Transverse colon (tissue), 4 donors: ENCODE measurements at regions of chr20 and their contacts with region 1.

Region 1: DNA sequence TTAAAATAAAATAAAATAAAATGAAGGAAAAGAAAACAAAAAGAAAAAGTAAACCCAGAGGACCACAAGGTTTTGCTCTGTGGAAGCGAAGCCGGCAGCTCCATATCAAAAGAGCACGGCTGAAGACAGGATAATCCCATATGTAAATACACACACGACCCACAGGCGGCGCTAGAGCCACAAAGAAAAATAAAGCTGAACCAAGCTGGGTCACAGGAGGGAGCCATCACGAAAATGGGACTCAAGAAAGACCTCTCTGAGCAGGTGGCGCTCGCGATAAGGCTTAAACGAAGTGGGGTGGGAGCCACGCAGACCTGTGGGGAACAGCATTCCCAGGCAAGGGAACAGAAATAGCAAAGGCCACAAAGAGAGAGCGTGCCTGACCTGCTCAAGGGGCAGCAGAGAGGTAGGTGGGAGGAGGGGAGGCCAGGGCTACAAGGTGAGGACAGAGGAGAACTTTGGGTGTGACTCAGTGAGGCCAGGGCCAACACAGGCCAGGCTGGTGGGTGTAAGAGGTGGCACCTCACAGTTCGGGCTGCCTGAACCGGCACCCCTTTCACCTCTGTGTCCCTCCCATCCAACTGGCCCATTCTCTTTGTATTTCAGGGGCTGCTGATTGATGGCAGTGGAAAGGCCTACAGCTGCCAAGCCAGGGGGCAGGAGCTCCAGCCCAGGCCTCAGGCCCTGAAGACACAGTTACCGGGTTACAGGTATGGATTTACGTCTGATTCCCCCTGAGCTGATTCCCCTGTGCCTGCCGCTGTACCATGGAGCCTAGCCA is 26.0 kb downstream of the PTGIS start:
- DNase-seq: peak; percentile 73
- H3K4me3 ChIP-seq: no peak overlapping the region
- H3K27ac ChIP-seq: peak overlapping the region in 1 of 4 donors; percentile 40
- H3K4me1 ChIP-seq: no peaks in the 10 kb centered on the region
- H3K27me3 ChIP-seq: no peaks in the 10 kb centered on the region
- CTCF ChIP-seq: peak; percentile 79 to 97 (median 81)
- EP300 ChIP-seq: no peak
- POLR2A ChIP-seq: no peak

Region 2: GRCh38 chr20:49330544-49331239 is 211.2 kb before region 1 on chr20:
- in situ Hi-C with region 1: loop called in 1 of 4 experiments (anchors 5 kb)
- intact Hi-C with region 1: loop called (anchors 5 kb)
- DNase-seq: no peak
- H3K4me3 ChIP-seq: no peak overlapping the region
- H3K27ac ChIP-seq: no peak overlapping the region
- H3K4me1 ChIP-seq: peaks cover 0 to 8% (median 0%) of the 10 kb centered on the region in 4 donors
- H3K27me3 ChIP-seq: peaks cover 14% of the 10 kb centered on the region
- CTCF ChIP-seq: no peak
- EP300 ChIP-seq: no peak
- POLR2A ChIP-seq: no peak

Region 3: DNA sequence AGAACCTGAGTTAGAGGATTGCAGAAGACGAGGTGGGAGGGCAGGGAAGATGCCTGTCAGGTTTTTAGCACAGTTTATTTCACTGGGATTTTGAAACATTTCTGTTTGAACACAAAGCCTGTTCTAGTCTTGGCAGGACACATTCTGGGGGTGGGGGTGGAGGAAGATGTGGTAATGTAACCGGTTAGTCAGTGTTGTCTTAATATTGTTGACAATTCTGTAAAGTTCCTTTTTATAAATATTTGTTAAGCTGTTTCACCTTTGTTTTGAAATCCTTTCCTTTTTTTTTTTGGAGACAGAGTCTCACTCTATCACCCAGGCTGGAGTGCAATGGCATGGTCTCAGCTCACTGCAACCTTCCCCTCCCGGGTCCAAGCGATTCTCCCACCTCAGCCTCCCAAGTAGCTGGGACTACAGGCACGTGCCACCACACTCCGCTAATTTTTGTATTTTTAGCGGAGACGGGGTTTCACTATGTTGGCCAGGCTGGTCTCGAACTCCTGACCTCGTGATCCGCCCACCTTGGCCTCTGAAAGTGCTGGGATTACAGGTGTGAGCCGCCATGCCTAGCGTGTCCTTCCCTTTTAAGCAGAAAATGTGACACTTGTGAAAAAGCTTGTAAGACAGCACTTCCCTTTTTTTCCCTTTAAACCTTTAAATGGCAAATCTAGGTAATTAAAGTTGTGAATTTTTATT is 290.9 kb after region 1 on chr20:
- in situ Hi-C with region 1: no loop called
- intact Hi-C with region 1: no loop called
- DNase-seq: no peak
- H3K4me3 ChIP-seq: no peak overlapping the region
- H3K27ac ChIP-seq: peak overlapping the region; percentile 8 to 61 (median 42)
- H3K4me1 ChIP-seq: peaks cover 0 to 7% (median 2%) of the 10 kb centered on the region in 4 donors
- H3K27me3 ChIP-seq: no peaks in the 10 kb centered on the region
- CTCF ChIP-seq: no peak
- EP300 ChIP-seq: no peak
- POLR2A ChIP-seq: no peak

Region 4: DNA sequence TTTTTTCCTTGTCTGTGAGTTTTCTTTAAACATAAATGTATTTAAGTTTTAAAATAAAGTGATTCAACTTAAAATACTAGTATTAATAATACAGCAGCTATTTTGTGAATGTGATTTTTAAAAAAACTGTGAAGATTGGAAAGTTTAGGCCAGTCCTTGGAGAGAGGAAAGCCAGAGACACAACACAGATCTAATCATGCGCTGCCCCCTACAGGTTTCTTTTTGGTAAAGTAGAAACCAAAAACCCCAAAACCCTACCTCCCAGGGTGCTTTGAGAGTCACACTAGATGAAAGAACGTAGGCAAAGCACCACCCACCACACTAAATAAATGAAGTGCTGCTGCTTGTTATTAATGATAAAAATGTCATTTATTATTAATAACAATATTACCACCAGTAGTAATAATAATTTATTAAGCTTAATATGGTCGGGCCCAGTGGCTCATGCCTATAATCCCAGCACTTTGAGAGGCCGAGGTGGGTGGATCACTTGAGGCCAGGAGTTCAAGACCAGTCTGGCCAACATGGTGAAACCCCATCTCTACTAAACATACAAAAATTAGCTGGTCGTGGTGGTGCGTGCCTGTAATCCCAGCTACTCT is 304.4 kb after region 1 on chr20:
- in situ Hi-C with region 1: loop called in 2 of 4 experiments (anchors 10 kb)
- intact Hi-C with region 1: loop called (anchors 10 kb)
- DNase-seq: peak; percentile 46
- H3K4me3 ChIP-seq: no peak overlapping the region
- H3K27ac ChIP-seq: no peak overlapping the region
- H3K4me1 ChIP-seq: peaks cover 0 to 11% (median 0%) of the 10 kb centered on the region in 4 donors
- H3K27me3 ChIP-seq: no peaks in the 10 kb centered on the region
- CTCF ChIP-seq: peak; percentile 63 to 73 (median 72)
- EP300 ChIP-seq: no peak
- POLR2A ChIP-seq: no peak

Region 5: DNA sequence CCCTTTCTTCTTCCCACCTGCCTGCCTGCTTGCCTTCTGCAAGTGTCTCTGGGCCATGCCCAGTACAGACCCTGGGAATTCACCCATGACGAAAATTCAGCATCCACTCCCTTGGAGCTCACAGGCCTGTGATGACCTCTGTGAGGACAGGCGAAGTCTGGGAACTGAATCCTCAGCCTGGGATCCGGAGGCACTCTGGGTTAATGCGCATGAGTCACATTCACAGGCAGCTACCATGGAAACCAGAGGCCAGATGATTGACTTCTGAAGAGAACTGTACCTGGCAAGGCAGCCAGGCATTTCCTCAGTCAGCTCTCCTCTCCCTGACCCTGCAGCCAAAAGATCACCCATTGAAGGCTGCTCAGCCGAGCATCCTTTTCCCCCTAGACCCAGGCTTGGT is 311.7 kb after region 1 on chr20:
- in situ Hi-C with region 1: loop called in 2 of 4 experiments (anchors 10 kb)
- intact Hi-C with region 1: loop called (anchors 10 kb)
- DNase-seq: no peak
- H3K4me3 ChIP-seq: no peak overlapping the region
- H3K27ac ChIP-seq: no peak overlapping the region
- H3K4me1 ChIP-seq: peaks cover 0 to 7% (median 0%) of the 10 kb centered on the region in 4 donors
- H3K27me3 ChIP-seq: no peaks in the 10 kb centered on the region
- CTCF ChIP-seq: no peak
- EP300 ChIP-seq: no peak
- POLR2A ChIP-seq: no peak